Activated CD4-positive, alpha-beta memory T cell treated with anti-CD3 and anti-CD28 coated beads for 36 hours (primary cell): ENCODE measurements at regions of chr7 and their contacts with region 1.

Region 1: GRCh38 chr7:139104091-139104450 is 5.4 kb downstream of the ZC3HAV1 start:
- DNase-seq: peak; percentile 70
- H3K4me3 Mint-ChIP-seq: peak overlapping the region; percentile 86
- H3K27ac Mint-ChIP-seq: peak overlapping the region; percentile 97
- H3K4me1 Mint-ChIP-seq: peaks cover 32% of the 10 kb centered on the region
- H3K27me3 Mint-ChIP-seq: no peaks in the 10 kb centered on the region

Region 2: DNA sequence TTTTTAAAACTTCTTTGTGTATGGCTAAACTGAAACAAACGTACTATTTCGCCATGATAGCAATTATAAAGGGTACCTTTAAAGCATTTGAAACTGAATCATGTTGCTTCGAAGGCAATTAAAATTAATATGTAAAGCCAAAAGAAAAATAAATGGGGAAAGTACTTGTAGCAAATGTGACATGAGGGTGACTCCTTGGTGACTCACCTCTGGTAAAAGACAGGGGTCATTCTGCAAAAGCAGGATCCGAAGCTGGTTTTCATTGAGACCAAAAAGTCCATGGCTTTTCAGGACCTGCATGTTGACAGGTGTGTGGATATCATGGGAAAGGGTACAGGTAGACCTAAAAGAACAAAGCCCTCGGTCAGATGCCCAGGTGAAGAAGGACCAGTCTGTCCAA is 69.7 kb before region 1 on chr7:
- CTCF ChIA-PET with region 1: no interaction called
- POLR2A ChIA-PET with region 1: no interaction called
- intact Hi-C with region 1: no loop called
- DNase-seq: no peak
- H3K4me3 Mint-ChIP-seq: peak overlapping the region; percentile 81
- H3K27ac Mint-ChIP-seq: no peak overlapping the region
- H3K4me1 Mint-ChIP-seq: peaks cover 21% of the 10 kb centered on the region
- H3K27me3 Mint-ChIP-seq: no peaks in the 10 kb centered on the region

Region 3: DNA sequence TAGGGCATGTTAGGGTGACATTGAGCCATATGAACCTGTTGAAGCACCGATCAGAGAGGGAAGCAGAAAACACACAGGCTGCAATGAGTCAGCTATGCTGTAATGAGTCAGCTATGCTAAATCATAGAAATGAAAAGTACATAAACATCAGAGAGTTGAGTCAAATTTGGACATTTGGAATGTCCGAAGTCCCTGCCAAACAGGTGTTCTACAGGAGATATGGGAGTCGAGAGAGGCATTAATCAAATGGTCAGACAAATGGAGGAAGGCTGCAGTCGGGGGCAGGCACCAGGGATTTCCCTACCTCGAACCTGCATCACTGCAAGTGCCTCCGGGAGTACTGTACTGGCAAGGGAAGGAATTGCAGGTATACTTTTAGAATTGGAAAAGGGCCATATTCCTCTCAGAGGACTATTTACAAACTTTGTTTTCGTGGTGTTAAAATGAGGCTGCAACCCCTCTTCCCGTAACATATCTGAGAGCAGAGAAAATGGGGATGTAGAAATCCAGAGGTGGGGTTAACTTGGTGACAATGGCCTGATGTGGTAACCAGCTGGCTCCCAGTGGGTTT is 14.2 kb after region 1 on chr7:
- CTCF ChIA-PET with region 1: interaction called, 4 read pairs
- POLR2A ChIA-PET with region 1: interaction called, 6 read pairs
- intact Hi-C with region 1: loop called (anchors 1 kb)
- DNase-seq: peak; percentile 66
- H3K4me3 Mint-ChIP-seq: peak overlapping the region; percentile 53
- H3K27ac Mint-ChIP-seq: peak overlapping the region; percentile 72
- H3K4me1 Mint-ChIP-seq: peaks cover 29% of the 10 kb centered on the region
- H3K27me3 Mint-ChIP-seq: no peaks in the 10 kb centered on the region

Region 4: GRCh38 chr7:139218173-139218572 is 114.1 kb after region 1 on chr7:
- CTCF ChIA-PET with region 1: no interaction called
- POLR2A ChIA-PET with region 1: no interaction called
- intact Hi-C with region 1: no loop called
- DNase-seq: no peak
- H3K4me3 Mint-ChIP-seq: no peak overlapping the region
- H3K27ac Mint-ChIP-seq: no peak overlapping the region
- H3K4me1 Mint-ChIP-seq: no peaks in the 10 kb centered on the region
- H3K27me3 Mint-ChIP-seq: no peaks in the 10 kb centered on the region